Heart left ventricle (tissue), 16 donors: ENCODE measurements at regions of chr1 and their contacts with region 1.

Region 1: GRCh38 chr1:78676347-78676982 is 26.8 kb downstream of the IFI44 start:
- DNase-seq: peak in 2 of 5 donors; percentile 41 to 44
- ATAC-seq: peak in 1 of 4 donors; percentile 51
- H3K4me3 ChIP-seq: peak overlapping the region in 1 of 12 donors; percentile 23
- H3K27ac ChIP-seq: no peak overlapping the region
- H3K4me1 ChIP-seq: peaks cover 0 to 6% (median 0%) of the 10 kb centered on the region in 12 donors
- H3K27me3 ChIP-seq: no peaks in the 10 kb centered on the region
- CTCF ChIP-seq: peak; percentile 69 to 92 (median 89)
- POLR2A ChIP-seq: no peak

Region 2: GRCh38 chr1:78132174-78132947 is 544.1 kb before region 1 on chr1:
- intact Hi-C with region 1: loop called in 1 of 10 experiments (anchors 10 kb)
- DNase-seq: no peak
- ATAC-seq: no peak
- H3K4me3 ChIP-seq: no peak overlapping the region
- H3K27ac ChIP-seq: no peak overlapping the region
- H3K4me1 ChIP-seq: no peaks in the 10 kb centered on the region
- H3K27me3 ChIP-seq: no peaks in the 10 kb centered on the region
- CTCF ChIP-seq: no peak
- POLR2A ChIP-seq: no peak

Region 3: GRCh38 chr1:78145105-78145580 is 531.3 kb before region 1 on chr1:
- intact Hi-C with region 1: loop called in 9 of 10 experiments (anchors 2 to 10 kb)
- DNase-seq: peak in 3 of 5 donors; percentile 34 to 38 (median 34)
- ATAC-seq: peak in 3 of 4 donors; percentile 56 to 76 (median 74)
- H3K4me3 ChIP-seq: no peak overlapping the region
- H3K27ac ChIP-seq: no peak overlapping the region
- H3K4me1 ChIP-seq: peaks cover 0 to 9% (median 0%) of the 10 kb centered on the region in 12 donors
- H3K27me3 ChIP-seq: no peaks in the 10 kb centered on the region
- CTCF ChIP-seq: peak; percentile 52 to 92 (median 80)
- POLR2A ChIP-seq: no peak

Region 4: GRCh38 chr1:78617615-78618026 is 58.8 kb before region 1 on chr1:
- intact Hi-C with region 1: loop called (anchors 1 to 5 kb)
- DNase-seq: peak; percentile 52 to 73 (median 66)
- ATAC-seq: peak; percentile 79 to 93 (median 82)
- H3K4me3 ChIP-seq: peak overlapping the region in 5 of 12 donors; percentile 10 to 28 (median 22)
- H3K27ac ChIP-seq: peak overlapping the region in 1 of 12 donors; percentile 75
- H3K4me1 ChIP-seq: peaks cover 0 to 37% (median 6%) of the 10 kb centered on the region in 12 donors
- H3K27me3 ChIP-seq: no peaks in the 10 kb centered on the region
- CTCF ChIP-seq: peak; percentile 70 to 93 (median 84)
- POLR2A ChIP-seq: no peak